ENCODE measurements at regions of chr12 and their contacts with region 1.

Region 1: GRCh38 chr12:12786716-12787601 is 1.5 kb downstream of the APOLD1 start:
- DNase-seq: peak; percentile 67
- H3K4me3 Mint-ChIP-seq: peak overlapping the region; percentile 83
- H3K27ac Mint-ChIP-seq: peak overlapping the region; percentile 84
- H3K4me1 Mint-ChIP-seq: peaks cover 27% of the 10 kb centered on the region
- H3K27me3 Mint-ChIP-seq: no peaks in the 10 kb centered on the region

Region 2: GRCh38 chr12:12724661-12725545 is 62.1 kb before region 1 on chr12:
- CTCF ChIA-PET with region 1: interaction called, 3 read pairs
- intact Hi-C with region 1: loop called (anchors 2 kb)
- DNase-seq: peak; percentile 94
- H3K4me3 Mint-ChIP-seq: peak overlapping the region; percentile 85
- H3K27ac Mint-ChIP-seq: peak overlapping the region; percentile 98
- H3K4me1 Mint-ChIP-seq: peaks cover 51% of the 10 kb centered on the region
- H3K27me3 Mint-ChIP-seq: no peaks in the 10 kb centered on the region

Region 3: GRCh38 chr12:12813120-12814101 is 26.5 kb after region 1 on chr12 and contains the start of gene DDX47:
- CTCF ChIA-PET with region 1: interaction called, 36 read pairs
- intact Hi-C with region 1: loop called (anchors 1 kb)
- DNase-seq: peak; percentile 99
- H3K4me3 Mint-ChIP-seq: peak within 1 kb of the TSS; percentile 99
- H3K27ac Mint-ChIP-seq: peak within 1 kb of the TSS; percentile 93
- H3K4me1 Mint-ChIP-seq: peaks cover 57% of the 10 kb centered on the region
- H3K27me3 Mint-ChIP-seq: no peaks in the 10 kb centered on the region
- total RNA-seq, gene DDX47: 86.6 to 87.3 TPM

Region 4: DNA sequence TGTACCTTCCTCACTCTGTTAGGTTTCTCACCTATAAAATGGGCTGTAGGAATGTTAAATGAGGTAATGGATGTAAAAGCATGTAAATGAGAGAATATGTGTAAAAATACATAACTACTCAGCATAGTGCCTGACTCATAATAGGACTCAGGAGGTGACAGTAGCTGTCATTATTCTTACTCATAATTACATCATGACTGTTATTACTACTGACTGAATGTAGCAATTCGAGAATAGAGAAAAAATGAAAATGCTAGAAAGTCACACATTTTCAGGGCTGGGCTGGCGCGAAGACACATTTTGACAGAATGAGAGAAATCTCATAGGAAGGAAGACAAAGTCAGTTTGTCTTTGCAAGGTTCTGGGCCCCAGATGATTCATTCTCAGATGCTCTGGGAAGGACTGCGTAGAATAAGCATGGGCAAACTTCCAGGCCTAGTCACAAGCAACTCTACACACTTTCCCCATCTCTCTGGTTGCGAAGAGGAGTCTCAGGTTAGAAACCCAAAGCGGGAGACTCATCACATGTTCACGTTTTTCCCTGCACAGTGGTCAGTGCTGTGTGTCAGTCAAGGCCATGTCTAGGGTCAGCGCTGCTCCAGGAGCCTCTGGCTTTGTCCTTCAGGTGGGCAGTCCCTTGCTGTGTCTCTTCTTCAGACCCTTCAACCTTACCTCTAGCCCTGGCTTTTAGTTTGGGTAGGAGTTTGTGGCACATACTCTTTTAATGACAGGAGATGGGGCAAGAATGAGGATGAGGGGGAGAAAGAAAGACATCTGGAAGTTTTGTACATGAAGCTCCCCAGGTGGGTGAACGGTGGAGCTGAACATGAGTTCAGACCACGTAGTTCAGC is 112.8 kb after region 1 on chr12:
- CTCF ChIA-PET with region 1: no interaction called
- intact Hi-C with region 1: loop called (anchors 2 kb)
- DNase-seq: peak; percentile 91
- H3K4me3 Mint-ChIP-seq: no peak overlapping the region
- H3K27ac Mint-ChIP-seq: peak overlapping the region; percentile 90
- H3K4me1 Mint-ChIP-seq: peaks cover 31% of the 10 kb centered on the region
- H3K27me3 Mint-ChIP-seq: peaks cover 4% of the 10 kb centered on the region

Region 5: DNA sequence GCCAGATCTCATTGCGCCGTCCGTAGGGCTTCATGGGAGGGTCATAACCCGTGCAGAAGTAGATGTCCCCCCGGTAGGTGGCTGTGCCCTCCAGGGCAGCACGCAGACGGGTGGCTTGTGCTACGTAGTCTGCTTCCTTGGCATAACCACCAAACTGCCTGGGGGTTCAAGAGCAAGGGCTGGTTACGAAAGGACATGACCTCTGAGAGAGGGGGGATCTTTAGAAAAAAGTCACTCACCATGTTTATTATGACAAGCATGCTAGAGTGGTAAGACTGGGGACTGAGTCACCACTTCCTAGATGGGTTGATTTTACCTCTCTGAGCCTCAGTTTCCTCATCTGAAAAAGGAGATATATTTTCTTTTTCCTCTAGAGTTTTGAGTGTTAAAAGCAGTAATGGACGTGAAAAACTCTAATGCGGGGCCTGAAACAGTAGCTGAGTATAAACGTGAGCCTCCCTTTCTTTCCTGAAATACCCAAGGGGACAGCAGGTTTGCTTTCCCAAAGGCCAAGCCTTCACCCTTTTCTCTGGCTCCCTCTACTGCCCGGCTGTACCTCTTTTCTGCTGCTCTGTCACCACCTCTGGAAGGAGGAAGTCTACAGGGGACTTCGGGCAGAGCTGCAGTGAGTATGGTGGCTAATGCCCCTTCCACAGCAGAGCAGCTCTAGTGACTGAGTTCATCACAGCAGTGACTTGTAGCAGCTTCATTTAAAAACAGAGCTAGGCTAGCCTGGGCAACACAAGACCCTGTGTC is 188.5 kb after region 1 on chr12:
- CTCF ChIA-PET with region 1: interaction called, 3 read pairs
- intact Hi-C with region 1: loop called (anchors 2 kb)
- DNase-seq: peak; percentile 49
- H3K4me3 Mint-ChIP-seq: no peak overlapping the region
- H3K27ac Mint-ChIP-seq: no peak overlapping the region
- H3K4me1 Mint-ChIP-seq: no peaks in the 10 kb centered on the region
- H3K27me3 Mint-ChIP-seq: no peaks in the 10 kb centered on the region

Region 6: GRCh38 chr12:12999959-13000615 is 213.1 kb after region 1 on chr12 and contains the start of gene HEBP1:
- CTCF ChIA-PET with region 1: no interaction called
- intact Hi-C with region 1: loop called (anchors 1 kb)
- DNase-seq: peak; percentile 97
- H3K4me3 Mint-ChIP-seq: peak within 1 kb of the TSS; percentile 77
- H3K27ac Mint-ChIP-seq: peak within 1 kb of the TSS; percentile 31
- H3K4me1 Mint-ChIP-seq: peaks cover 26% of the 10 kb centered on the region
- H3K27me3 Mint-ChIP-seq: peaks cover 6% of the 10 kb centered on the region
- total RNA-seq, gene HEBP1: 28.7 to 32.3 TPM

Region 7: DNA sequence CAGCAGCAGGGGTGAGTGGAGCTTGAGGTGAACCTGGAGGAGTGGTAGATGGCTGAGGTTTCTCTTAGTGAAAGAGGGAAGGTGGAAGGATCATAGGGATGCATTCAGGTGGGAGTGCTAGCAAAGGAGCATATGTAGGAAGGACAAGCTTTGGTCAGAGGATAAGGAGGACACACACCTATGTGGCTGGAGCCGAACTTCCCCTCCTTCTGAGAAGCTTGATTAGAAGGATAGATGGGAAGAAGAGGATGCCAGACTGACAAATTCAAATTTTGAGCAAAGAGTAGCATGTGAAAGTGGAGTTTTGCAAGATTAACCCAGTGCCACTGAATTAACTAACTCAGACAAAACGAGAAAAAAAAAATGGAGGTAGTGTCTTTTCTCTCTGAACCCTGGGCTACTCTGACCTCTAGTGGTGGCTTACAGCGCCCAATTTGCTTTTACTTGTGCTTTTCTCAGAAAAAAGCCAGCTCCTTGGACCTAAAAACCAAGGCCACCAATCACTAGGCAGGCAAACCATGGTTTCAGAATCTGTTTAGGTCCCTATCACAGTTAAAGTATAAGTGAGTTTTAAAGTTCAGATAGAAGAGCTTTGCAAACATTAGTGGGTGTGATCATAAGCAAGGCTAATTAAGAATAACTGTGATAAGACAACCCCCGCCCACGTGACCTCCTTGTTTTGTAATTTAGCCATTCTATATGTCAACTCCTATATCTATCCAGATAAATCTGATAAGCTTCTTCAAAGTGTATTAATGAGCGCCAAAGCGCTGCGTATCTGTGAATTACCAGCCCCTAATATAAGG is 425.1 kb after region 1 on chr12:
- CTCF ChIA-PET with region 1: interaction called, 19 read pairs
- intact Hi-C with region 1: loop called (anchors 1 kb)
- DNase-seq: peak; percentile 86
- H3K4me3 Mint-ChIP-seq: no peak overlapping the region
- H3K27ac Mint-ChIP-seq: no peak overlapping the region
- H3K4me1 Mint-ChIP-seq: peaks cover 20% of the 10 kb centered on the region
- H3K27me3 Mint-ChIP-seq: peaks cover 2% of the 10 kb centered on the region